ENCODE measurements at regions of chr4 and their contacts with region 1.

Region 1: GRCh38 chr4:54217642-54218495 is 11.2 kb upstream of the PDGFRA start:
- DNase-seq: peak in 5 of 6 donors; percentile 44 to 76 (median 53)
- ATAC-seq: peak; percentile 95 to 98 (median 98)
- H3K4me3 ChIP-seq: peak overlapping the region in 1 of 4 donors; percentile 33
- H3K27ac ChIP-seq: no peak overlapping the region
- H3K4me1 ChIP-seq: no peaks in the 10 kb centered on the region
- H3K27me3 ChIP-seq: peaks cover 0 to 7% (median 2%) of the 10 kb centered on the region in 4 donors
- CTCF ChIP-seq: peak; percentile 81 to 92 (median 86)

Region 2: GRCh38 chr4:53914313-53915016 is 303.4 kb before region 1 on chr4:
- intact Hi-C with region 1: loop called in 1 of 3 experiments (anchors 10 kb)
- DNase-seq: no peak
- ATAC-seq: peak in 2 of 4 donors; percentile 34 to 39
- H3K4me3 ChIP-seq: no peak overlapping the region
- H3K27ac ChIP-seq: no peak overlapping the region
- H3K4me1 ChIP-seq: no peaks in the 10 kb centered on the region
- H3K27me3 ChIP-seq: no peaks in the 10 kb centered on the region
- CTCF ChIP-seq: no peak

Region 3: GRCh38 chr4:53929955-53930798 is 287.7 kb before region 1 on chr4:
- intact Hi-C with region 1: loop called in 1 of 3 experiments (anchors 5 kb)
- DNase-seq: peak in 4 of 6 donors; percentile 49 to 73 (median 61)
- ATAC-seq: peak; percentile 89 to 98 (median 98)
- H3K4me3 ChIP-seq: no peak overlapping the region
- H3K27ac ChIP-seq: no peak overlapping the region
- H3K4me1 ChIP-seq: no peaks in the 10 kb centered on the region
- H3K27me3 ChIP-seq: no peaks in the 10 kb centered on the region
- CTCF ChIP-seq: peak; percentile 32 to 58 (median 49)

Region 4: GRCh38 chr4:54346445-54346844 is 128.6 kb after region 1 on chr4:
- intact Hi-C with region 1: no loop called
- DNase-seq: no peak
- ATAC-seq: no peak
- H3K4me3 ChIP-seq: no peak overlapping the region
- H3K27ac ChIP-seq: no peak overlapping the region
- H3K4me1 ChIP-seq: no peaks in the 10 kb centered on the region
- H3K27me3 ChIP-seq: no peaks in the 10 kb centered on the region
- CTCF ChIP-seq: no peak

Measured in pancreas (tissue), 10 donors.